ENCODE measurements at regions of chr9 and their contacts with region 1.

Region 1: DNA sequence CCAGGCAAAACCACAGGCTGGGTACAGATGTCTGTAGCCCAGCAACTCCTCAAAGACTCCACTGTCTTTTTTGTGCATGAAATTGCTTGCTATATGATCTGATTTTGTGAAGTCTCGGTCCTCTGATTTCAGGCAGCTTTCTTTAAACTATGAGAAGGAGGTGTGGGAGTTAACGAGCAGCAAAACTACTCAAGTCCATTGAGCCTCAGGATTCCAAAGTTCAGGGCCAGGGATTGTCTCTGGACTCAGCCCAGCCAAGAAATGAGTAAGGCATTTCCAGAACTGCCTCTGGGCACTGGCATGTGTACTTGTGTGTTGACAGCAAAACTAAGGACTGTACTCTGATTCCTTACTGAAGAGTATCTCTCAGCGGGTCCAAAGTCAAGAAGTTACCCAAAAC is 53.4 kb upstream of the GLIS3 start:
- DNase-seq: no peak
- H3K4me3 ChIP-seq: no peak overlapping the region
- H3K27me3 ChIP-seq: no peaks in the 10 kb centered on the region
- CTCF ChIP-seq: no peak

Region 2: GRCh38 chr9:4277531-4277991 is 75.7 kb before region 1 on chr9:
- CTCF ChIA-PET with region 1: no interaction called
- POLR2A ChIA-PET with region 1: no interaction called
- DNase-seq: no peak
- H3K4me3 ChIP-seq: no peak overlapping the region
- H3K27me3 ChIP-seq: no peaks in the 10 kb centered on the region
- CTCF ChIP-seq: no peak

Region 3: DNA sequence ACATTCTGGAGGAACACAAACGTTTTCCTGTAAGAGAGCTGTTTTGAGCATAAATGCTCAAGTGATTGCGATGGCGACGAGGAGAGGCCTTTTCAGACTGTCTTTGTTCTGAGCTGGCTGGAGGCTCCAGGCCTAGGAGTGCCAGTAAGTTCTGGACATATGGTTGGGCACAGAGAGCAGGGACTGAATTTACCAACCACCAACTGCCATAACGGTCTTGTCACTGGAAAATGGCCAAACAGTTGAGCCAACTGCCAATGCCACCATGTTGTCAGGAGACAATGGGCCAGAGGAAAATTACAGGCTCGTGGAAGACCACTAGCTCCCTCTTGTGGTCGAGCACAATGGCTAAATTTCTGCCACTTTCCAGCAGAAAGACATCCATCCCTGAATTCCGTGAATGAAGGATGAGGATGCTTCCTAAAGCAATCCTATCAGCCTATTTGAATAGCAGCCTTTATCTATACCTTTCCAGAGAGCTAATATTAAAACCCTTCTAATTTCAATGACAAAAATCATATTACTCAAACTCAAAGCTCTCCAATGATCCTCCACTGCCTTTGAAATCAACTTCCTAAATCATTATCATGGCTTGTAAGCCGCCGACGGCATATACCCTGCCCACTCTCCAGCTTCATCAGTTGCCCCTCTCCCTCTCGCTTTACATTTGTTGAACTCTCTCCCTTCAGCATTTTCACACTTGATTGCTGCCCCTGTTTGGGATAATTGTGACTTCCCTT is 13.5 kb after region 1 on chr9:
- CTCF ChIA-PET with region 1: interaction called, 15 read pairs
- POLR2A ChIA-PET with region 1: interaction called, 3 read pairs
- DNase-seq: no peak
- H3K4me3 ChIP-seq: no peak overlapping the region
- H3K27me3 ChIP-seq: peaks cover 2% of the 10 kb centered on the region
- CTCF ChIP-seq: peak; percentile 87

Measured in BJ (cell line).